ENCODE measurements at regions of chr1 and their contacts with region 1.

Region 1: DNA sequence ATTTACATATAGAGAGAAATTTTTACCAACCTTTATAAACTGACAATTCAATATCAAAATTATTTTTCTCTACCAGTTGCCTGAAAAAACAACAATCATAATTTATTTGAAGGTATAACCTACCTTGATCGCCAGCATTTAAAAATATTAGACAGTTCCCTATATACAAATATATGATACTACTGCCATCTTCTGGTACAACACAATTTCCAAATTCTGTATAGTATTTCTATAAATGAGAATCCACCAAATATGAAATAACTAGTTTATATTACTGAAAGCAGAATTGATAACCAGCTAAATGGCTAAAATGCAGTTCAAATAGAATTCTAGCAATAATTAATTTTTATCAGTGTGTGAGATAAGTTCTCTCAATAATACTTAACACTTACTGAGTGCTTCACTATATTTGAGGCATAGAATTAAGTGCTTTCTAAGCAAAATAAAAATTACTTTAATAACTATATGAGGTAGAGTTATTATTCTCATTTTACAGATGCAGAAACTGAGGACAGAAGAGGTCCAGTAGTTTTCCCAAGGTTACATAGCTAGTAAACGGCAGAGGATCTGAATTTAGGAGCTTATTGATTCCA is 75.6 kb downstream of the PIGK start:
- DNase-seq: peak in 2 of 9 experiments; percentile 15 to 28
- ATAC-seq: no peak
- H3K4me3 ChIP-seq: no peak overlapping the region
- H3K4me3 Mint-ChIP-seq: no peak overlapping the region
- H3K27ac ChIP-seq: no peak overlapping the region
- H3K27ac Mint-ChIP-seq: no peak overlapping the region
- H3K4me1 ChIP-seq: peaks cover 6% of the 10 kb centered on the region
- H3K4me1 Mint-ChIP-seq: peaks cover 5% of the 10 kb centered on the region
- H3K27me3 ChIP-seq: no peaks in the 10 kb centered on the region
- H3K27me3 Mint-ChIP-seq: no peaks in the 10 kb centered on the region
- CTCF ChIP-seq: peak; percentile 53

Region 2: GRCh38 chr1:75991497-75992114 is 1152.0 kb before region 1 on chr1:
- CTCF ChIA-PET with region 1: interaction called, 6 read pairs
- POLR2A ChIA-PET with region 1: no interaction called
- intact Hi-C with region 1: loop called in 1 of 2 experiments (anchors 5 kb)
- DNase-seq: peak; percentile 22 to 80 (median 71)
- ATAC-seq: peak; percentile 34
- H3K4me3 ChIP-seq: no peak overlapping the region
- H3K4me3 Mint-ChIP-seq: no peak overlapping the region
- H3K27ac ChIP-seq: no peak overlapping the region
- H3K27ac Mint-ChIP-seq: no peak overlapping the region
- H3K4me1 ChIP-seq: no peaks in the 10 kb centered on the region
- H3K4me1 Mint-ChIP-seq: no peaks in the 10 kb centered on the region
- H3K27me3 ChIP-seq: peaks cover 0 to 2% of the 10 kb centered on the region in 2 experiments
- H3K27me3 Mint-ChIP-seq: peaks cover 3% of the 10 kb centered on the region
- CTCF ChIP-seq: peak; percentile 70

Region 3: GRCh38 chr1:76330991-76331603 is 812.5 kb before region 1 on chr1:
- CTCF ChIA-PET with region 1: no interaction called
- POLR2A ChIA-PET with region 1: no interaction called
- intact Hi-C with region 1: loop called in 1 of 2 experiments (anchors 5 kb)
- DNase-seq: peak in 5 of 9 experiments; percentile 12 to 59 (median 33)
- ATAC-seq: peak; percentile 71
- H3K4me3 ChIP-seq: no peak overlapping the region
- H3K4me3 Mint-ChIP-seq: no peak overlapping the region
- H3K27ac ChIP-seq: no peak overlapping the region
- H3K27ac Mint-ChIP-seq: no peak overlapping the region
- H3K4me1 ChIP-seq: no peaks in the 10 kb centered on the region
- H3K4me1 Mint-ChIP-seq: peaks cover 4% of the 10 kb centered on the region
- H3K27me3 ChIP-seq: no peaks in the 10 kb centered on the region
- H3K27me3 Mint-ChIP-seq: no peaks in the 10 kb centered on the region
- CTCF ChIP-seq: peak; percentile 91

Region 4: DNA sequence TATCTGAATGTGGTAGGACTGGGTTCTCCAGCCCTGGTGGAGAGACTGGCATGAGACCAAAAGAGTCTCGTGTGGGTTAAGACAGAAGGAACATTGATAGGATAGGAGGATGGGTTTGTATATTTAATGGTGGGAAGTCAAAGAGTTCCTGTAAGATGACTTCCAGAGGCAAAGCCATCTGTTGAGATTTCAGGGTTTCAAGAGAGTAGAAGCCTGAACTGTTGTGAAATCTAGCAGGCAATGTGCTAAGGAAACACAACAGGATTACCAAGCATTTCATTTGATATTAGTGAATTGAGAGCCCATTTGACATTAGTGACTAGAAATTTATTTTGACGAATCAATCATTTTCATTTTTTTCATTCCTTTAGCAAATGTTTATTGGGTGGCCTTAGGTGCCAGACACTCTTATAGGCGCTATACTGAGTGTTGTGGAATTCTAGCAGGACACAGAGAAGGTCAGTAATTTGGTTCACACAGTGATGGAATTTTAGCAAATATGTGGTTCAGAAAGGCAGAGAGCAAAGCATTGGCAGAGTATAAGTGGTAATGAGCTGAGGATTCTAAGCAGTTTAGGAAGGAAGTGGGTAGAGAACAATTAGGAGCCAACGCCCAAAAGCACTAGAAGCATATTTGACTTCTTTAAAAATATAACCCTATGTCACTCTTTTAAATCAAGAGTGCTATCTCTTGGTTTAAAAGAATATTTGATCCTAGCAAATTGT is 287.5 kb after region 1 on chr1:
- CTCF ChIA-PET with region 1: no interaction called
- POLR2A ChIA-PET with region 1: interaction called, 3 read pairs
- intact Hi-C with region 1: loop called in 1 of 2 experiments (anchors 2 kb)
- DNase-seq: peak in 2 of 9 experiments; percentile 50 to 68
- ATAC-seq: peak; percentile 95
- H3K4me3 ChIP-seq: peak overlapping the region in 1 of 2 experiments; percentile 5
- H3K4me3 Mint-ChIP-seq: no peak overlapping the region
- H3K27ac ChIP-seq: peak overlapping the region; percentile 38 to 82
- H3K27ac Mint-ChIP-seq: no peak overlapping the region
- H3K4me1 ChIP-seq: peaks cover 58% of the 10 kb centered on the region
- H3K4me1 Mint-ChIP-seq: peaks cover 26% of the 10 kb centered on the region
- H3K27me3 ChIP-seq: no peaks in the 10 kb centered on the region
- H3K27me3 Mint-ChIP-seq: no peaks in the 10 kb centered on the region
- CTCF ChIP-seq: no peak

Region 5: GRCh38 chr1:77533660-77534305 is 390.2 kb after region 1 on chr1:
- CTCF ChIA-PET with region 1: interaction called, 17 read pairs
- POLR2A ChIA-PET with region 1: interaction called, 3 read pairs
- intact Hi-C with region 1: loop called (anchors 1 kb)
- DNase-seq: peak; percentile 26 to 77 (median 61)
- ATAC-seq: peak; percentile 62
- H3K4me3 ChIP-seq: no peak overlapping the region
- H3K4me3 Mint-ChIP-seq: peak overlapping the region; percentile 38
- H3K27ac ChIP-seq: no peak overlapping the region
- H3K27ac Mint-ChIP-seq: peak overlapping the region; percentile 21
- H3K4me1 ChIP-seq: peaks cover 9% of the 10 kb centered on the region
- H3K4me1 Mint-ChIP-seq: peaks cover 7% of the 10 kb centered on the region
- H3K27me3 ChIP-seq: no peaks in the 10 kb centered on the region
- H3K27me3 Mint-ChIP-seq: no peaks in the 10 kb centered on the region
- CTCF ChIP-seq: peak; percentile 91

Region 6: GRCh38 chr1:77706321-77706720 is 562.7 kb after region 1 on chr1:
- CTCF ChIA-PET with region 1: no interaction called
- POLR2A ChIA-PET with region 1: no interaction called
- intact Hi-C with region 1: loop called (anchors 10 kb)
- DNase-seq: no peak
- ATAC-seq: no peak
- H3K4me3 ChIP-seq: no peak overlapping the region
- H3K4me3 Mint-ChIP-seq: no peak overlapping the region
- H3K27ac ChIP-seq: no peak overlapping the region
- H3K27ac Mint-ChIP-seq: no peak overlapping the region
- H3K4me1 ChIP-seq: no peaks in the 10 kb centered on the region
- H3K4me1 Mint-ChIP-seq: no peaks in the 10 kb centered on the region
- H3K27me3 ChIP-seq: no peaks in the 10 kb centered on the region
- H3K27me3 Mint-ChIP-seq: no peaks in the 10 kb centered on the region
- CTCF ChIP-seq: no peak

Region 7: DNA sequence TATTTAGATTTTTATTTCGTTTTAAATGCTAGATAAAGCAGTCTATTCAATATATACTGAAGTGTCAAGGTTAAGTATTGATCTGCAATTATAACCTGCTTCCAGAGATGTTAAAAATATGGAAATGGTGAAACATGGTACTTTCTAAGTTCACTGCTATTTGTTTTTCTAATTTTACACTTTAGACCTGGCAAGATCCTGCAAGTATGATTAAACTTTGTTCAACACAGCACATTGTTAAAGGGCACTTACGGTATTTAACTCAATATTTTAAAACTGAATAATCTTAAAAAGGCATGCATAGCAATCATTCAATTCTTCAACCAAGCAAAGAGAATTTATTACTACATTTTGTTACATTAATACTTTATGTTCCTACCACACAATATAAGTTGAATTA is 574.6 kb after region 1 on chr1:
- CTCF ChIA-PET with region 1: no interaction called
- POLR2A ChIA-PET with region 1: no interaction called
- intact Hi-C with region 1: loop called in 1 of 2 experiments (anchors 10 kb)
- DNase-seq: no peak
- ATAC-seq: no peak
- H3K4me3 ChIP-seq: no peak overlapping the region
- H3K4me3 Mint-ChIP-seq: no peak overlapping the region
- H3K27ac ChIP-seq: no peak overlapping the region
- H3K27ac Mint-ChIP-seq: no peak overlapping the region
- H3K4me1 ChIP-seq: no peaks in the 10 kb centered on the region
- H3K4me1 Mint-ChIP-seq: no peaks in the 10 kb centered on the region
- H3K27me3 ChIP-seq: no peaks in the 10 kb centered on the region
- H3K27me3 Mint-ChIP-seq: no peaks in the 10 kb centered on the region
- CTCF ChIP-seq: no peak

Measured in CD8-positive, alpha-beta T cell (primary cell).